Activated CD4-positive, alpha-beta memory T cell treated with anti-CD3 and anti-CD28 coated beads for 36 hours (primary cell): ENCODE measurements at regions of chr9 and their contacts with region 1.

Region 1: GRCh38 chr9:20622330-20623020 is at the start of gene MLLT3:
- DNase-seq: peak; percentile 98
- H3K4me3 Mint-ChIP-seq: peak within 1 kb of the TSS; percentile 96
- H3K27ac Mint-ChIP-seq: peak within 1 kb of the TSS; percentile 94
- H3K4me1 Mint-ChIP-seq: peaks cover 41% of the 10 kb centered on the region
- H3K27me3 Mint-ChIP-seq: no peaks in the 10 kb centered on the region
- total RNA-seq, gene MLLT3: 30.8 to 34.0 TPM

Region 2: DNA sequence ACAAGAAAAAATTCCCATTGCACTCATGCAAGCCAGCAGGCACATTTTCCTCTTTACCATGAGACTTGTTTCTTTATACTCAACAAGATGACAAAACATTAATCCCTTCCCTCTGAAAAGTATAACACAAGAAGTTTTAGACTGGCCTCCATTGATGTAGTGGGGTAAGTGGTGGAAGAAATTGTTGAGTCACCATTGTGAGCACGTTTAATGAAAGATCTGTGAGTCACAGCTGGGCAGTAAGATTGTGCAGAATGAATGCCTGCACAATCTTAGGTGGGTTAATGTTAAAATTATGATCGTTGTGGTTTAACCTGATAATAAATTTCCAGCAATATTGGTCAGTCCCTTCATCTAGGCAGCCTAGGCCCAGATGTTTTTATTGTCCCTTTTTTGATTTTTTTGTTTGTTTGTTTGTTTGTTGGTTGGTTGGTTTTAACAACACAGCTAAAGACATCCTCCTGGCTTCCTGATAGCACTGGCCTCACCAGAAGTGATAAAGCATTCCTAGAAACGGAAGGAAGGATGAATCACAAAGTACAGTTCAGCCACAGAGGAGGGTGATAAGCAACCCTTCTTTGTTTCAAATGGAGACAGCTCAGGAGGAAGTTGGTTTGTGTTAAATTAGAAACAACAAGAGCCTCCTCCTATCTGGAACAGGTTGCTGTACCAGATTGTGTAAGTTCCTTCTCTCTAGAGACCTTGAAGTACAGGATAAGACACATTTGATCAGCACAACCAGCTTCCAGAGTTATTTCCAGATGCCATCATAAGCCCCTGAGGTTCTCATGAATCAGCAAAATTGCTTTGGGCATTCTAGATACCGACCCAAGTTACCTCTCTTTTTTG is 874.0 kb before region 1 on chr9:
- CTCF ChIA-PET with region 1: no interaction called
- POLR2A ChIA-PET with region 1: no interaction called
- intact Hi-C with region 1: no loop called
- DNase-seq: no peak
- H3K4me3 Mint-ChIP-seq: no peak overlapping the region
- H3K27ac Mint-ChIP-seq: peak overlapping the region; percentile 28
- H3K4me1 Mint-ChIP-seq: peaks cover 15% of the 10 kb centered on the region
- H3K27me3 Mint-ChIP-seq: no peaks in the 10 kb centered on the region

Region 3: DNA sequence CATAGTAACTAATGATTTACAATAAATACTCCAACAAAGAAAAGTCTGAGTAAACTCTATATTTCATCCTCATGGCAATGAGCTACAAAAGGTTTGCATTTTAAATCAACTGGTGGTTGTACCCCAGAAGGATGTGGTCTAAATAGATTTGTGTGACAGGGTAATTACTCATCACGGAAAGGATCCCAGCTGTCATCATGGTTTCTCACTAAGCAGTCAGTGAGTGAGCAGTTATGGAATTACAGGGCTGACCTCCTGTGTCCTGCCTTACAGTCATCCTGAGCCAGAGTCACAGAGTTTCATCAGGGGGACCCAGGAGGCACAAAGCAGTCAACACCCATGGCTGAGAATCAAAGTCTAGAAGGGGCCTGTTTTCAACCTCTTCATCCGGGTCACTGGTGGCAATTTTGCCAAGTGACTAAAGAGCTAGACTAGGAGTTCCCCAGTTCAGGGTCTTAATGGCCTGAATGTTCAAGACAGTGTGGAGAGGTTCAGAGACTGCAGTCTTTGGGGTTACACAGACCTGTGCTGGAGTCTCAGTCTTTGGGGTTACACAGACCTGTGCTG is 622.9 kb before region 1 on chr9:
- CTCF ChIA-PET with region 1: no interaction called
- POLR2A ChIA-PET with region 1: interaction called, 10 read pairs
- intact Hi-C with region 1: loop called (anchors 2 kb)
- DNase-seq: peak; percentile 85
- H3K4me3 Mint-ChIP-seq: no peak overlapping the region
- H3K27ac Mint-ChIP-seq: peak overlapping the region; percentile 88
- H3K4me1 Mint-ChIP-seq: peaks cover 49% of the 10 kb centered on the region
- H3K27me3 Mint-ChIP-seq: peaks cover 1% of the 10 kb centered on the region

Region 4: GRCh38 chr9:20356403-20357035 is 266.0 kb before region 1 on chr9:
- CTCF ChIA-PET with region 1: interaction called, 12 read pairs
- POLR2A ChIA-PET with region 1: interaction called, 9 read pairs
- intact Hi-C with region 1: loop called (anchors 1 kb)
- DNase-seq: peak; percentile 72
- H3K4me3 Mint-ChIP-seq: no peak overlapping the region
- H3K27ac Mint-ChIP-seq: no peak overlapping the region
- H3K4me1 Mint-ChIP-seq: peaks cover 61% of the 10 kb centered on the region
- H3K27me3 Mint-ChIP-seq: no peaks in the 10 kb centered on the region

Region 5: GRCh38 chr9:20508242-20508641 is 114.2 kb before region 1 on chr9:
- CTCF ChIA-PET with region 1: interaction called, 3 read pairs
- POLR2A ChIA-PET with region 1: no interaction called
- intact Hi-C with region 1: loop called (anchors 5 kb)
- DNase-seq: peak; percentile 18
- H3K4me3 Mint-ChIP-seq: no peak overlapping the region
- H3K27ac Mint-ChIP-seq: no peak overlapping the region
- H3K4me1 Mint-ChIP-seq: peaks cover 76% of the 10 kb centered on the region
- H3K27me3 Mint-ChIP-seq: no peaks in the 10 kb centered on the region

Region 6: DNA sequence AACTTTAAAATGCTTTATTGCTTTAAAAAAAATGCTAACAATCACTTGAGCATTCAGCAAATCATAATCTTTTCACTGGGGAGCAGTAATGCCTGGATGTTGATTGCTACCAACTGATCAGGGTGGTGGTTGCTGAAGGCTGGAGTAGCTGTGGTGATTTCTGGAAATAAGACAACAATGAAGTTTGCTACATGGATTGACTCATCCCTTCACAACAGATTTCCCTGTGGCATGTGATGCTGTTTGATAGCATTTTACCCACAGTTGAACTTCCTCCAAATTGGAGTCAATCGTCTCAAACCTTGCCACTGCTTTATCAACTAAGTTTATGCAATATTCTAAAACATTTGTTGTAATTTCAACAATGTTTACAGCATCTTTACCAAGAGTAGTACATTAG is 83.5 kb before region 1 on chr9:
- CTCF ChIA-PET with region 1: no interaction called
- POLR2A ChIA-PET with region 1: no interaction called
- intact Hi-C with region 1: no loop called
- DNase-seq: no peak
- H3K4me3 Mint-ChIP-seq: no peak overlapping the region
- H3K27ac Mint-ChIP-seq: no peak overlapping the region
- H3K4me1 Mint-ChIP-seq: peaks cover 38% of the 10 kb centered on the region
- H3K27me3 Mint-ChIP-seq: no peaks in the 10 kb centered on the region

Region 7: GRCh38 chr9:20584968-20585643 is 37.4 kb before region 1 on chr9:
- CTCF ChIA-PET with region 1: no interaction called
- POLR2A ChIA-PET with region 1: no interaction called
- intact Hi-C with region 1: no loop called
- DNase-seq: peak; percentile 22
- H3K4me3 Mint-ChIP-seq: no peak overlapping the region
- H3K27ac Mint-ChIP-seq: no peak overlapping the region
- H3K4me1 Mint-ChIP-seq: peaks cover 52% of the 10 kb centered on the region
- H3K27me3 Mint-ChIP-seq: no peaks in the 10 kb centered on the region

Region 8: GRCh38 chr9:20604562-20604961 is 17.9 kb before region 1 on chr9:
- CTCF ChIA-PET with region 1: interaction called, 6 read pairs
- POLR2A ChIA-PET with region 1: interaction called, 9 read pairs
- intact Hi-C with region 1: loop called (anchors 2 kb)
- DNase-seq: no peak
- H3K4me3 Mint-ChIP-seq: peak overlapping the region; percentile 34
- H3K27ac Mint-ChIP-seq: peak overlapping the region; percentile 49
- H3K4me1 Mint-ChIP-seq: peaks cover 72% of the 10 kb centered on the region
- H3K27me3 Mint-ChIP-seq: no peaks in the 10 kb centered on the region

Region 9: GRCh38 chr9:20941174-20941690 is 318.8 kb after region 1 on chr9:
- CTCF ChIA-PET with region 1: interaction called, 85 read pairs
- POLR2A ChIA-PET with region 1: no interaction called
- intact Hi-C with region 1: loop called (anchors 1 kb)
- DNase-seq: peak; percentile 60
- H3K4me3 Mint-ChIP-seq: no peak overlapping the region
- H3K27ac Mint-ChIP-seq: no peak overlapping the region
- H3K4me1 Mint-ChIP-seq: peaks cover 3% of the 10 kb centered on the region
- H3K27me3 Mint-ChIP-seq: no peaks in the 10 kb centered on the region

Region 10: GRCh38 chr9:21110708-21111576 is 488.5 kb after region 1 on chr9:
- CTCF ChIA-PET with region 1: interaction called, 32 read pairs
- POLR2A ChIA-PET with region 1: no interaction called
- intact Hi-C with region 1: loop called (anchors 1 kb)
- DNase-seq: no peak
- H3K4me3 Mint-ChIP-seq: no peak overlapping the region
- H3K27ac Mint-ChIP-seq: no peak overlapping the region
- H3K4me1 Mint-ChIP-seq: no peaks in the 10 kb centered on the region
- H3K27me3 Mint-ChIP-seq: no peaks in the 10 kb centered on the region